Endothelial cell of umbilical vein (primary cell): ENCODE measurements at regions of chr3 and their contacts with region 1.

Region 1: DNA sequence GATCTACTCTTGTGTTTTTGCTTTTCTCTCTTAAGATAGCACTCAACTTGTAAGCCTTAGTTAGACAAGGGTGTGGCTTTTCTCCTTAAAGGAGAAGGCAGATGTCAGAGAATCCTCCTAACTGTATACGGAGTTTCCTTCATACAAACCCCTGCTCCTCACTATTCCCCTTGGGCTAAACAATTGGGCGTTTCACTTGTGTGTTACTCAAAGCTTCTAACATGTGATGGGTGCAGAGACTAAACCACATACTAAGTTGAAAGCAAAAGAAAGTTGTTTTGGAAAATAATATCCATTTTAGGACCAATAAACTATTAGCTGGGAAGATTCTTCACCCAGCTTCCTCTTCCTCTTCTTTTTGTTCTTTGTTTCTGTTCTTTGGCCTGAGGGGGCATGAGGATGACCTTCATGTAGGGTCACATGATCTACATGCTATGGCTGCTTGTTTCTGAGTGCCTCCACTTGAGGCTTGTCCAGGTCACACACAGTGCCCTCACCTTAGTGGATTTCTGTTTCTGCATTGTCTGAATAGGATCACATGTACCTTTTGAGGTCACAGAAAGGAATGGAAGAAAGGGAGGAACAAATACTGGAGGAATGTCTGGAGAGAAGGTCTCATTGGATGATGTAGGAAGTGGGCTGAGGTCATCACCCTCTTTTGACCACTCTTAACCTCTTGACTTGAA is 14.5 kb downstream of the SPINK8 start:
- DNase-seq: no peak
- H3K4me3 ChIP-seq: no peak overlapping the region
- H3K27ac ChIP-seq: no peak overlapping the region
- H3K4me1 ChIP-seq: no peaks in the 10 kb centered on the region
- H3K27me3 ChIP-seq: peaks cover 17 to 19% of the 10 kb centered on the region in 2 experiments
- CTCF ChIP-seq: no peak
- POLR2A ChIP-seq: no peak

Region 2: GRCh38 chr3:48388966-48389365 is 70.0 kb after region 1 on chr3:
- CTCF ChIA-PET with region 1: no interaction called
- POLR2A ChIA-PET with region 1: no interaction called
- dilution Hi-C with region 1: no loop called
- intact Hi-C with region 1: loop called (anchors 2 kb)
- DNase-seq: no peak
- H3K4me3 ChIP-seq: no peak overlapping the region
- H3K27ac ChIP-seq: no peak overlapping the region
- H3K4me1 ChIP-seq: no peaks in the 10 kb centered on the region
- H3K27me3 ChIP-seq: peaks cover 15 to 40% of the 10 kb centered on the region in 2 experiments
- CTCF ChIP-seq: no peak
- POLR2A ChIP-seq: no peak